ENCODE measurements at regions of chr20 and their contacts with region 1.

Region 1: DNA sequence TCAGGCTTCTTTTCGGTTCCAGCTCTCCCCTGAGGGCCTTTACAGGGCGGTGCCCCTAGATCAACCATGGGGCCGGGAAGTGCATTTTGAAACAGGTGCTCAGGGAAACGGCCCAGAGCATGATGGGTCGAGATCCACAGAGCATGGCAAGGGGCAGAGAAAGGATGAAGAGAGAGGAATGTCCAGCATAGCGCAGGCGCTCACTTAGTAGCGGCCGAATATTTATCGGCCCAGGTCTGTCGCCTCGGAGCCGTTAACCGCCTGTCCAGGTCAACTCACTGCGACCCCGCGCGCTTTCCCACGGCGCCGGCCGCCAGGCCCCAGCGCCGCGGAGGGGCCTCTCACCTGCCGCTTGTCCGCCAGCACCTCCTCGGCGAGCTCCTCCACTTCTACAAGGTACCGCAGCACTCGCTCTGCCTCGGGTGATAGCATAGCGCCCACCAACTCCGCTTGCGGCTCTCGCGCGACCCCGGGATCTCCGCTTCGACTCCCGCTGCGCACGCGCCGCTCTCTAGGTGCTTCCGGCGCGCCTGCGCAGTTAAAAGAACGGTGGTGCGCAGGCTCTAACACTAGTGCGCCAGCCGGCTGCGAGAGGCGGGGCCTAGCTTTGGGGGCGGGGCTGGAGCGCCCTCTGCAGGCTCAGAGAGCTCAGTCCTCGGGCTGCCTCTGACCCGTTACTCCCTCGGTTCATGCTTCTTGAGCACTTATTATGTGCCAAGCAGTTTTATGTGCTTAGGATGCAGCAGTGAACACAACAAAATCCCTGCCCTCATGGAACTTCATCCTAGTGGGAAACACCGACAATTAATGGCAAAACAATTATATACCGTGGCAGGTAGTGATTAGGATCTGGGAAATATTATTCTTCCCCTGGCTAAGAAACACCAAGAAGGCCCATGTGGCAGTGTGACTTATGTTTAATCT is at the start of gene PDRG1:
- DNase-seq: peak; percentile 98
- ATAC-seq: peak; percentile 97
- H3K4me3 Mint-ChIP-seq: peak within 1 kb of the TSS; percentile 98
- H3K27ac Mint-ChIP-seq: peak within 1 kb of the TSS; percentile 96
- H3K4me1 Mint-ChIP-seq: peaks cover 30% of the 10 kb centered on the region
- H3K27me3 Mint-ChIP-seq: peaks cover 8% of the 10 kb centered on the region
- total RNA-seq, gene PDRG1: 15.0 to 16.1 TPM

Region 2: DNA sequence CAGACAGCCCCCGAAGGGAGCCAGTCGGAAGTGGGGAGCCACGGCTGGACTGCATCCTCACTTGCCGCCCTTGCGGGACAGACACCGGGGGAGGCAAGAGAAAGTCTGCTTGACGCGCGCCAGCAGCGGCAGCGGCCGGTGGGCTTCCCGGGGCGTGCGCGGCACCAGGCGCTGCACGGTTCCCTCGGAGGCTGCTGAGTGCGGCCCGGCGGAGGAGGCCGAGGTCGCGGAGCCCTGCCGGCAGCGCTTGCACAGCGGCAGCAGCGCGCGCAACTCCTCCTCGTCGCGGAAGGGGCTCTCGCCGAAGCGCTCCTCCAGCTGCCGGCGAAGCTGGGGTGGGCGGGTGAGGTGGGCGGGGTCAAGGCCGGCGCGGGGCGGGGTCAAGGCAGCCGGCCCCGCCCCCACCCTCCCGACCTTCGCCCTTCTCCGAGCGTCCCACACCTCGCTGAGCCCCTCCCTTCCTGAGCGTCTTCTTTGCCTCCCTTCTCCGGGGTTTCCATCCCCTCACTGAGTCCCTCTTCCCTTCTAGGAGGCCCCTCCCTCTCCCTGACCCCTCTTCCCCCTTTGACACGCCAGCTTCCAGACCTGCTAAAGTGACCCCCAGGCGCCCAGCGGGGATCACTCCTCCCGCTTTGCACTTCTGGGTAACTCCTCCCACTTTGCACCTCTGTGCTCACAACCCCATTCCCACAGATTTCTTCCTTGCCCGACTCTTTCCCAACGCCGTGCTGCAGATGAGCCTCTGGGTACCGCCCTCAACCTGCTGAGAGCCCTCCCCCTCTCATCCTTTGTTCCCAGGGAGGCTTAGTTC is 90.2 kb before region 1 on chr20:
- CTCF ChIA-PET with region 1: interaction called, 103 read pairs
- POLR2A ChIA-PET with region 1: interaction called, 3 read pairs
- DNase-seq: peak; percentile 82
- ATAC-seq: peak; percentile 93
- H3K4me3 Mint-ChIP-seq: peak overlapping the region; percentile 26
- H3K27ac Mint-ChIP-seq: no peak overlapping the region
- H3K4me1 Mint-ChIP-seq: peaks cover 23% of the 10 kb centered on the region
- H3K27me3 Mint-ChIP-seq: peaks cover 28% of the 10 kb centered on the region

Region 3: DNA sequence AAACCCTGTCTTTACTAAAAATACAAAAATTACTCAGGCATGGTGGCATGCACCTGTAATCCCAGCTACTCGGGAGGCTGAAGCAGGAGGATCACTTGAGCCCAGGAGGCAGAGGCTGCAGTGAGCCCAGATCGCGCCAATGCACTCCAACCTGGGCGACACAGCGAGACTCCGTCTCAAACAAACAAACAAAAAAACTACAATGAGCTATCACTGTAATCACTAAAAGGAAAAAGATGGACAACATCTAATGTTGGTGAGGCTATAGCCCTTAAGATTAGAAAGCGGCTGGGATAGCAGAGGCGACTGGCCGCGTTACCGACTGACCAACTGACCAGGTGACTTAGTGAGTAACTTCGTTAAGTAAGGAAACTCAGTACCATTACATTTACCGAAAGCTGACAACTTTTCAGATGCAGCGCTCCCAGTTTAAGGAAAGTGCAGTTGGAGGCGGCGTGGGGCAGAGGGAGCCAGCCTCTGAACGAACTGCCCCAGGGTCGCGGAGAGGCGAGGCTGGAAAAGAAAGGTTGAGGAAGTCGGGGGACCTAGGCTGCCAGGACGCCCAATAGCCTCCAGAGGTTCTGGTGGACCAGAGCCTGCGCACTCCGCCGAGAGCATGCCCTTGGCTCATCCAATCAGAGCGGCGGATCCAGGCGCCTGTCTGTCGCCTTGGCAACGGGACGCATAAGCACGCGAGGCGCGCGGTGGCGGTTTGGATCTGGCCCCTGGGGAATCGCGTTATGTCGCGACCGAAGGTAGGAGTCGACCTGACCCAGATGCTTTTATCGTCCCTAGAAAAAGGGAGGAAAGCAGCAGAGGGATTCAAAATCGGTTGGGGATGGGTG is 72.4 kb before region 1 on chr20:
- CTCF ChIA-PET with region 1: interaction called, 13 read pairs
- POLR2A ChIA-PET with region 1: no interaction called
- DNase-seq: peak; percentile 86
- ATAC-seq: peak; percentile 96
- H3K4me3 Mint-ChIP-seq: peak overlapping the region; percentile 87
- H3K27ac Mint-ChIP-seq: peak overlapping the region; percentile 62
- H3K4me1 Mint-ChIP-seq: peaks cover 13% of the 10 kb centered on the region
- H3K27me3 Mint-ChIP-seq: peaks cover 35% of the 10 kb centered on the region

Measured in activated CD8-positive, alpha-beta T cell treated with anti-CD3 and anti-CD28 coated beads, Interleukin-2, amount 10 ng/mL, durations not matched to agents 7 days and 5 days (primary cell).